ENCODE measurements at regions of chr22 and their contacts with region 1.

Region 1: GRCh38 chr22:29154364-29155048 is 51.2 kb upstream of the EMID1 start:
- DNase-seq: peak; percentile 79 to 93
- H3K4me3 ChIP-seq: peak overlapping the region; percentile 21 to 37 (median 28)
- H3K27ac ChIP-seq: peak overlapping the region in 3 of 5 donors; percentile 13 to 74 (median 33)
- H3K4me1 ChIP-seq: peaks cover 5 to 33% (median 17%) of the 10 kb centered on the region in 4 donors
- H3K27me3 ChIP-seq: no peaks in the 10 kb centered on the region
- CTCF ChIP-seq: peak in 5 of 7 experiments; percentile 62 to 96 (median 94)
- EP300 ChIP-seq: no peak
- POLR2A ChIP-seq: no peak

Region 2: GRCh38 chr22:29040385-29041275 is 113.9 kb before region 1 on chr22:
- intact Hi-C with region 1: loop called (anchors 10 kb)
- DNase-seq: peak; percentile 74 to 94
- H3K4me3 ChIP-seq: no peak overlapping the region
- H3K27ac ChIP-seq: peak overlapping the region in 3 of 5 donors; percentile 46 to 67 (median 50)
- H3K4me1 ChIP-seq: peaks cover 15 to 49% (median 23%) of the 10 kb centered on the region in 4 donors
- H3K27me3 ChIP-seq: no peaks in the 10 kb centered on the region
- CTCF ChIP-seq: peak in 6 of 7 experiments; percentile 43 to 96 (median 96)
- EP300 ChIP-seq: no peak
- POLR2A ChIP-seq: no peak

Region 3: GRCh38 chr22:29291215-29291614 is 136.7 kb after region 1 on chr22:
- intact Hi-C with region 1: no loop called
- DNase-seq: no peak
- H3K4me3 ChIP-seq: no peak overlapping the region
- H3K27ac ChIP-seq: peak overlapping the region in 1 of 5 donors; percentile 13
- H3K4me1 ChIP-seq: peaks cover 0 to 27% (median 8%) of the 10 kb centered on the region in 4 donors
- H3K27me3 ChIP-seq: no peaks in the 10 kb centered on the region
- CTCF ChIP-seq: no peak
- EP300 ChIP-seq: no peak
- POLR2A ChIP-seq: no peak